Mammary epithelial cell (primary cell): ENCODE measurements at regions of chr12 and their contacts with region 1.

Region 1: DNA sequence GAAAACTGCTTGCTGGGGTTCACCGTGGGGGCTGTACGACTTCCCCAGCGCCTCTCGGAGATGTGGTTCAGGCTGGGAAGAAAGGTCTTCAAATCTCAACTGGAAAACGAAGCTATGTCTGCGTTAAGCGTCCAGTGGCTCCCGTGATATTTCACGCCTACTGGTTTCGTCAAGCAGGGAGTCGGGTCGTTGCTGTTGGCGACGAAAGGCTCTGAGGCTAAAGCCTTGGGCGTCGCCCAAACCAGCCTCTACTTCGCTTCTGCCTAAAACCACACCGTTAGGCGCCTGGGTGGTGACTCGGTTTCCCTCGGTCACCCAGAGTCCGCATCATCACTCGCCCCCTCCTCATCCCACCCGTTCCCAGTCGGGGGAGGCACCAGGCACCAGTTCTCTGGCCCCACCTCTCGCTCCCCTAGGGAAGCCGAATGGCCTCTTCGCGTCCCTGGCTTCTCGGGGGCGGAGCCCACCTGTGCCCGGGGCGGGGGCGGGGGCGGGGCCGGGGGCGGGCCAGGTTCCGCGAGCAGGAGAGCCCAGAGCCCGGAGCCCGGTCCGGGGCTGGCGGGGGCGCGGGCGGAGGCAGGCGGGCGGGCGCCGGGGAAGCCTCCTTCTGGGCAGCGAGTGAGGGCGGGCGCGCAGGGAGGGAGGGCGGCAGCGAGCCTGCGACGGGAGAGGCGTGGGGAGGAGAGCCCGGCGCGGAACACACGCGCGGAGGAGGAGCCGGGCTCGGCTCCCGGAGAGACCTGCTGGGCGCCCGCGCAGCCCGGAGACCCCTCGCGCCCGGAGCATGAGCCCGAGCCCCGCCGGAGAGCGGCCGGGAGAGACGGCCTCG is at the start of gene B4GALNT3:
- DNase-seq: peak; percentile 54
- H3K4me3 ChIP-seq: peak within 1 kb of the TSS; percentile 36 to 62 (median 59)
- H3K27ac ChIP-seq: no peak within 1 kb of the TSS
- H3K4me1 ChIP-seq: peaks cover 18% of the 10 kb centered on the region
- H3K27me3 ChIP-seq: no peaks in the 10 kb centered on the region
- CTCF ChIP-seq: no peak
- total RNA-seq, gene B4GALNT3: 5.3 to 5.4 TPM

Region 2: GRCh38 chr12:401235-402028 is 58.2 kb before region 1 on chr12 and contains the start of gene CCDC77:
- CTCF ChIA-PET with region 1: no interaction called
- dilution Hi-C with region 1: no loop called
- in situ Hi-C with region 1: no loop called
- intact Hi-C with region 1: no loop called
- DNase-seq: peak; percentile 90
- H3K4me3 ChIP-seq: peak within 1 kb of the TSS; percentile 72 to 79 (median 76)
- H3K27ac ChIP-seq: peak within 1 kb of the TSS; percentile 67
- H3K4me1 ChIP-seq: peaks cover 4% of the 10 kb centered on the region
- H3K27me3 ChIP-seq: no peaks in the 10 kb centered on the region
- CTCF ChIP-seq: peak in 1 of 2 donors; percentile 46
- total RNA-seq, gene CCDC77: 5.3 to 8.8 TPM

Region 3: GRCh38 chr12:422526-422925 is 37.1 kb before region 1 on chr12:
- CTCF ChIA-PET with region 1: no interaction called
- dilution Hi-C with region 1: no loop called
- in situ Hi-C with region 1: no loop called
- intact Hi-C with region 1: no loop called
- DNase-seq: no peak
- H3K4me3 ChIP-seq: no peak overlapping the region
- H3K27ac ChIP-seq: no peak overlapping the region
- H3K4me1 ChIP-seq: no peaks in the 10 kb centered on the region
- H3K27me3 ChIP-seq: no peaks in the 10 kb centered on the region
- CTCF ChIP-seq: no peak

Region 4: DNA sequence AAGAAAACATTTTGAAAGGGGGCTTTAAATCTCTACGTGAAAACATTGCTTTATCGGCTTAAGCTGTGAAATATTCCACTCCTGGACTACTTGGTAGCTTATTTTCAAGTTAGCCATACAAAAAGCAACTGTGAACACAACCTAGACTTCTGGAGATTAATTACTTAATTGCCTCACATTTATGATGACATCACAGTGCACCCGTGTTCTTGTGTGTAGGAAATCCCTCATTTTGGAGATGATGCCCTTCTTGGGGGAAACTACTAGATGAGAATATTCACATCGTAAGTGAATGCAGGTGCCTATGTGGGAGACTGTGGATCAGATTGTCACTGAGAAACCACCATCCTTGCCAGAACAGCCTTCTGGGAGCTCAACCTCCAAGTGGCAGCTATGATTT is 10.4 kb before region 1 on chr12:
- CTCF ChIA-PET with region 1: no interaction called
- dilution Hi-C with region 1: no loop called
- in situ Hi-C with region 1: no loop called
- intact Hi-C with region 1: no loop called
- DNase-seq: no peak
- H3K4me3 ChIP-seq: no peak overlapping the region
- H3K27ac ChIP-seq: no peak overlapping the region
- H3K4me1 ChIP-seq: no peaks in the 10 kb centered on the region
- H3K27me3 ChIP-seq: no peaks in the 10 kb centered on the region
- CTCF ChIP-seq: no peak

Region 5: DNA sequence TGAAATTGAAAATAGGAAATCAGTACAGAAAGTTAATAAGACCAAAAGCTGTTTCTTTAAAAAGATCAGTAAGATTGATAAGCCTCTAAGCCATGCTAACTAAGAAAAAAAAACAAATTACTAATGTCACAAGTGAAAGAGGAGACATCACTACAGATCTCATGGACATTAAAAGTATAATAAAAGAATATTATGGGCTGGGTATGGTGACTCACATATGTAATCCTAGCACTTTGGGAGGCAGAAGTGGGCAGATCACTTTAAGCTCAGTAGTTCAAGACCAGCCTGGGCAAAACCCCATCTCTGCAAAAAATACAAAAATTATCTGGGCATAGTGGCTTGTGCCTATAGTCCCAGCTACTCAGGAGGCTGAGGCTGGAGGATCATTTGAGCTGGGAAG is 30.6 kb after region 1 on chr12:
- CTCF ChIA-PET with region 1: no interaction called
- dilution Hi-C with region 1: loop called (anchors 5 kb)
- in situ Hi-C with region 1: no loop called
- intact Hi-C with region 1: no loop called
- DNase-seq: no peak
- H3K4me3 ChIP-seq: no peak overlapping the region
- H3K27ac ChIP-seq: no peak overlapping the region
- H3K4me1 ChIP-seq: no peaks in the 10 kb centered on the region
- H3K27me3 ChIP-seq: no peaks in the 10 kb centered on the region
- CTCF ChIP-seq: no peak

Region 6: GRCh38 chr12:530308-530707 is 70.7 kb after region 1 on chr12:
- CTCF ChIA-PET with region 1: no interaction called
- dilution Hi-C with region 1: loop called (anchors 5 kb)
- in situ Hi-C with region 1: loop called in 1 of 2 experiments (anchors 10 kb)
- intact Hi-C with region 1: loop called (anchors 2 kb)
- DNase-seq: peak; percentile 87
- H3K4me3 ChIP-seq: no peak overlapping the region
- H3K27ac ChIP-seq: no peak overlapping the region
- H3K4me1 ChIP-seq: peaks cover 21% of the 10 kb centered on the region
- H3K27me3 ChIP-seq: no peaks in the 10 kb centered on the region
- CTCF ChIP-seq: no peak

Region 7: GRCh38 chr12:538731-539539 is 79.3 kb after region 1 on chr12:
- CTCF ChIA-PET with region 1: no interaction called
- dilution Hi-C with region 1: loop called (anchors 5 kb)
- in situ Hi-C with region 1: loop called in 1 of 2 experiments (anchors 10 kb)
- intact Hi-C with region 1: no loop called
- DNase-seq: peak; percentile 75
- H3K4me3 ChIP-seq: no peak overlapping the region
- H3K27ac ChIP-seq: no peak overlapping the region
- H3K4me1 ChIP-seq: peaks cover 11% of the 10 kb centered on the region
- H3K27me3 ChIP-seq: no peaks in the 10 kb centered on the region
- CTCF ChIP-seq: no peak

Region 8: DNA sequence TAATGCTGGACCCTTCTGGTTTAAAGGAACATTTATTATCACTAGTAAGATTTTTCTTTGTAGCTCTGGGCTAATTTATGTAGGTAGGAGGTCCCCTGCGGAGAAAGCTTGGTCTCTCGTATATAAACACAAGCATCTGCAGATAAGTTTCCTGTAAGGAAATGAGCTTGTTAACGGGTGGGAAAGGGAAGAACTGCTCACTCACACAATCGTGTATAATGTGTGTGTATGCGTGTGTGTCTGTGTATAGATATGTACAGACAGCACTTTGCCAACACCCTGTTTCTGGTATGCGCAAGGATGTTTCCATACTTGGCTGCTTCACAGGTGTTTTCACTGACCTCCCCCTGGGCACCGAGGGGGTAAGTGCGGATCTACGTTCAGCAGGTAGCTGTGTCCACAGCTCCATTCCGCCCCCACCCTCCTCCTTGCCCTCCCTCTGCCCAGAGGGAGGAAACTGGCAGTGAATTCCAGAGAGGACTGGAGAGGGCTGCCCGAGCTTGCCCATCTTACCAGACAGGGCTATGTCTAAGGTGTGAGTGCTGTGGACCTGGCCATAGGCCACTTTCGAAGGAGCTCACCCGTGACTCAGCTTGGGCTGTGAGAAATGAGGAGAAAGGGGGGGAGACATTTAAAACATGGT is 138.4 kb after region 1 on chr12:
- CTCF ChIA-PET with region 1: no interaction called
- dilution Hi-C with region 1: no loop called
- in situ Hi-C with region 1: no loop called
- intact Hi-C with region 1: no loop called
- DNase-seq: peak; percentile 90
- H3K4me3 ChIP-seq: no peak overlapping the region
- H3K27ac ChIP-seq: peak overlapping the region; percentile 63
- H3K4me1 ChIP-seq: peaks cover 19% of the 10 kb centered on the region
- H3K27me3 ChIP-seq: no peaks in the 10 kb centered on the region
- CTCF ChIP-seq: no peak

Region 9: DNA sequence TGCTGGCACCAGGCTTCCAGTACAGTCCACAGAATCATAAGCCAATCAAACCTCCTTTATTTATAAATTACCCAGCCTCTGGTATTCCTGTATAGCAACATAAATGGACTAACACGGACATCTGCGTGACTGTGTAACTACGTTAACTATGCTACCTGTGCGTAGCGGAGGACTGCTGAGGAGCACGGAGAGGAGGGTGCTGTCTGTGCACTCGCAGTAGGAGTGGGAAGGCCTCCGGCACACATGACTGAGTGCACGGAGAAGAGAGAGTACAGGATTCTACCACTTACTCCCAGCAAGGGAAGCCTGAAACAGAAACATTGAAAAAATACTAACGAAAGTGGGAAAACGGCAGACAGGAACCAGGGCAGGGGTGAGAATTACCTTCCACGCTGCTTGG is 467.0 kb after region 1 on chr12:
- CTCF ChIA-PET with region 1: no interaction called
- dilution Hi-C with region 1: loop called (anchors 5 kb)
- in situ Hi-C with region 1: no loop called
- intact Hi-C with region 1: no loop called
- DNase-seq: no peak
- H3K4me3 ChIP-seq: no peak overlapping the region
- H3K27ac ChIP-seq: no peak overlapping the region
- H3K4me1 ChIP-seq: no peaks in the 10 kb centered on the region
- H3K27me3 ChIP-seq: no peaks in the 10 kb centered on the region
- CTCF ChIP-seq: no peak